ENCODE measurements at regions of chr12 and their contacts with region 1.

Region 1: DNA sequence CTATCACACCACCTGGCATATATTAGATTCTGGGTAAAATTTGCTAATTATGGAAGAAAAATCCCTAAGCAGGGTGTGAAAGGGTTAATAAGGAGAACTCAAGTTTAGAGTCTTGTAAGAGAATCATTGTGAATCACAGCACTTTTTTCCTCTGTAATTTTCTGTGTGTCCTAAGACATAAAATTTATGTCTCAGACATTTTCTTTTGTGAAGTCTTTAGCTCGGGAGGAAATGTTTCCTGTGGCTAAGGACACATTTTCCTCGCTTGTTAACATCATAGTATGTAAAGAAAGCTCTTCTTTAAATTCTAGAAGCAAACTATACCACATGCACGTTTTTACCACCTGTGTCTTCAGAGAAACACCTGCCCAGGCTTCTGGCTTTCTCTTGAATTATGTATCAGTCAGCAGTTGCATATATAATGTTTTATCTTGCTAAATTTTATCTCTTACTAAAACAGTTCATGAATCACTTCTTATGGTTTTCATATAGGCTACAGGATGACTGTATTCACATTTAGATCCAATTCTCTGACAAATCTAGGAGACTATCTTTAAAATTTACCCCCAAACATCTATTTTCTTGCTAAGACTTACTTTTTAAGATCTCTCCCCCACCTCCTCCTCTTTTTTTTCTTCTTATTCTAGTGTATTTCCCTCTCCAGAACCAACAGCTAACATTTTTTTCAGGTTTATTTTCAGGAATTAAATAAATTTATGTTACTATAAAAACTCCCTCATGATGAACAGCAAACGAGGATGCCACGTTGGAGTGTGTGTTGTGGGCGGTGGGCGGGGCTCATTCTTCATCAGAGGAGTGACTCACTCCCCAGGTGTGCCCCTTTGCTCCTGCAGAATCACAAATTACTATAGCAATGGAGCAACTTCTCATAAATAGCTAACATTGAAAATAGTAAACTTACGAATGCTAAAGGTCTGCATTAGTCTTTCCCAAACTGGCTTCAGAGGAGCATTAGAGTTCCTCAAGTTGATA is 11.6 kb upstream of the CSRP2 start:
- DNase-seq: peak; percentile 84
- ATAC-seq: peak; percentile 78
- H3K4me3 Mint-ChIP-seq: no peak overlapping the region
- H3K27ac Mint-ChIP-seq: peak overlapping the region; percentile 74
- H3K4me1 Mint-ChIP-seq: peaks cover 18% of the 10 kb centered on the region
- H3K27me3 Mint-ChIP-seq: peaks cover 6% of the 10 kb centered on the region

Region 2: GRCh38 chr12:76106631-76107030 is 783.8 kb before region 1 on chr12:
- CTCF ChIA-PET with region 1: no interaction called
- POLR2A ChIA-PET with region 1: no interaction called
- intact Hi-C with region 1: no loop called
- DNase-seq: no peak
- ATAC-seq: no peak
- H3K4me3 Mint-ChIP-seq: no peak overlapping the region
- H3K27ac Mint-ChIP-seq: no peak overlapping the region
- H3K4me1 Mint-ChIP-seq: no peaks in the 10 kb centered on the region
- H3K27me3 Mint-ChIP-seq: peaks cover 2% of the 10 kb centered on the region

Region 3: GRCh38 chr12:76878899-76879709 is 11.3 kb before region 1 on chr12 and contains the start of gene CSRP2:
- CTCF ChIA-PET with region 1: interaction called, 3 read pairs
- POLR2A ChIA-PET with region 1: no interaction called
- intact Hi-C with region 1: loop called in 1 of 2 experiments (anchors 1 kb)
- DNase-seq: peak; percentile 86
- ATAC-seq: peak; percentile 95
- H3K4me3 Mint-ChIP-seq: peak within 1 kb of the TSS; percentile 76
- H3K27ac Mint-ChIP-seq: peak within 1 kb of the TSS; percentile 23
- H3K4me1 Mint-ChIP-seq: peaks cover 14% of the 10 kb centered on the region
- H3K27me3 Mint-ChIP-seq: peaks cover 37% of the 10 kb centered on the region
- total RNA-seq, gene CSRP2: 1.8 to 2.0 TPM